SK-N-SH (cell line): ENCODE measurements at regions of chr5 and their contacts with region 1.

Region 1: GRCh38 chr5:142548739-142549275 is 137.1 kb downstream of the FGF1 start:
- DNase-seq: peak; percentile 87
- H3K4me3 ChIP-seq: peak overlapping the region in 1 of 2 experiments; percentile 34; a peak in 1 of 4 replicates
- H3K27ac ChIP-seq: peak overlapping the region; percentile 59 to 60; a peak in 3 of 4 replicates
- H3K4me1 ChIP-seq: peaks cover 21 to 37% of the 10 kb centered on the region in 2 experiments
- H3K27me3 ChIP-seq: no peaks in the 10 kb centered on the region
- CTCF ChIP-seq: peak; percentile 98
- EP300 ChIP-seq: no peak
- RAD21 ChIP-seq: peak; percentile 95

Region 2: DNA sequence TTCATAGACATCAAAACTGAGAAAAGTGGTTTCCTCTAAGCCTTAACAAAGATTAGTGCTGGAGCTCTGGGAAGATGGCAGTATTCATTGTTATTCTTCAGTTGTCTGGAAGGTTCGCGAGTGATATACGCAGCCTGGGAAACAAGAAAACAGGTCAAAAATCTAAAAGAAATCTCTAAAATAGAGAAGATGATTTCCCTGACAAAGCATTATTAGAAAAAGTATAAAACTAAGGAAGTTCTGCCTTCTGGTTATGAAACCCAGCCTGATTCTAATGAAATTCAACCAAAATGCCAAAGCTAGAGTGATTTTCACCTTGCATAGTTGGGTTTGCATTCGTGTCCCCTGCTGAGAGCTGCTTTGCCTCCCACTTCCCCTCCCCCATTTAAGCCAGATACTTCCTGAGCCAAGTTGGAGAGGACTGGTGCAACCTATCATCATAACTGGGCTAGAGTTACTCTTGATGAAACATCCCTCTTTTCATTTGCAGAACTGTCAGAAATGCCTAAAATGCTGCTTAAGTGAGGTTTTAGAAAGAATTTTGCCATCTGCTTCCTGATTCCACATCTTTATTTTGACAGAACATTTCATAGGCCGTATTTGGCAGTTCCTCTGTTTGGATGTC is 391.9 kb before region 1 on chr5:
- CTCF ChIA-PET with region 1: interaction called, 91 read pairs
- POLR2A ChIA-PET with region 1: interaction called, 5 read pairs
- DNase-seq: no peak
- H3K4me3 ChIP-seq: no peak overlapping the region
- H3K27ac ChIP-seq: peak overlapping the region in 1 of 2 experiments; percentile 65; a peak in 2 of 4 replicates
- H3K4me1 ChIP-seq: peaks cover 5 to 11% of the 10 kb centered on the region in 2 experiments; a peak in 3 of 4 replicates
- H3K27me3 ChIP-seq: no peaks in the 10 kb centered on the region
- CTCF ChIP-seq: no peak
- EP300 ChIP-seq: no peak
- RAD21 ChIP-seq: no peak

Region 3: GRCh38 chr5:142186857-142187594 is 361.8 kb before region 1 on chr5:
- CTCF ChIA-PET with region 1: interaction called, 34 read pairs
- POLR2A ChIA-PET with region 1: no interaction called
- DNase-seq: peak; percentile 67
- H3K4me3 ChIP-seq: no peak overlapping the region
- H3K27ac ChIP-seq: peak overlapping the region in 1 of 2 experiments; percentile 98; a peak in 2 of 4 replicates
- H3K4me1 ChIP-seq: peaks cover 0 to 49% of the 10 kb centered on the region in 2 experiments; a peak in 2 of 4 replicates
- H3K27me3 ChIP-seq: no peaks in the 10 kb centered on the region
- CTCF ChIP-seq: no peak
- EP300 ChIP-seq: peak in 1 of 2 experiments; percentile 12; a peak in 2 of 4 replicates
- RAD21 ChIP-seq: no peak

Region 4: DNA sequence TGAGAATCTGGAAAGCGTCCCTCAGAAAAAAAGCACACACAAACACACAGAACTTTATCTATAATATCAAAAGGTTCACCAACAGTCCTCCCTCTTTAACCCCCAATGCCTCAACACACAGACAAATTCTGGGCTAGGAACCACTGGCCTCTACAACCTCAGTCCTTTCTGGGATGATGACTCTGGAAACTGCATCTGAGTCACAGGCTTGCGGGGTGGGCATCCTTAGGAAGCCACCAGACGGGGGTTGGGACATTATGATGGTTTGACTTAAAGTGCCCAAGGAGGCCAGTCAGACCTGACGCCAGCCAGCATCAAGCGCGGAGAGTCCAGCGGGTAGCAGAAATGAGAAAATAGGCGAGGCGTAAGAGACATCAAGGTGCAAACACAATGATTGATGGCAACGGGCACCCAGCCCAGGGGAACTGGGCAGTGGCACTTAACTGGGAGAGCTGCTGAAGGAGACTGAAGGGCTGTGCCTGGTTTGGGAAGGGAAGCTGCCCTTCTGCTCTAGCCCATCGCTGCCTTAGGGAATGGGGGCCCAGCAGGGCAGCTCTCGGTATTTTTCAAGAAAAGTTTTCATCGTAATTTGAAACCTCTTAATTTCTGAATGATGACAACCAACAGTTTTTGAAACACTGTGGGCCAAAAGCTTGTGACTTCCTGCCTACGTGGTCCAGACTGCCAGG is 244.7 kb before region 1 on chr5:
- CTCF ChIA-PET with region 1: interaction called, 12 read pairs
- POLR2A ChIA-PET with region 1: no interaction called
- DNase-seq: no peak
- H3K4me3 ChIP-seq: no peak overlapping the region
- H3K27ac ChIP-seq: peak overlapping the region in 1 of 2 experiments; percentile 44; a peak in 3 of 4 replicates
- H3K4me1 ChIP-seq: peaks cover 15 to 30% of the 10 kb centered on the region in 2 experiments; a peak in 3 of 4 replicates
- H3K27me3 ChIP-seq: no peaks in the 10 kb centered on the region
- CTCF ChIP-seq: no peak
- EP300 ChIP-seq: no peak
- RAD21 ChIP-seq: no peak

Region 5: DNA sequence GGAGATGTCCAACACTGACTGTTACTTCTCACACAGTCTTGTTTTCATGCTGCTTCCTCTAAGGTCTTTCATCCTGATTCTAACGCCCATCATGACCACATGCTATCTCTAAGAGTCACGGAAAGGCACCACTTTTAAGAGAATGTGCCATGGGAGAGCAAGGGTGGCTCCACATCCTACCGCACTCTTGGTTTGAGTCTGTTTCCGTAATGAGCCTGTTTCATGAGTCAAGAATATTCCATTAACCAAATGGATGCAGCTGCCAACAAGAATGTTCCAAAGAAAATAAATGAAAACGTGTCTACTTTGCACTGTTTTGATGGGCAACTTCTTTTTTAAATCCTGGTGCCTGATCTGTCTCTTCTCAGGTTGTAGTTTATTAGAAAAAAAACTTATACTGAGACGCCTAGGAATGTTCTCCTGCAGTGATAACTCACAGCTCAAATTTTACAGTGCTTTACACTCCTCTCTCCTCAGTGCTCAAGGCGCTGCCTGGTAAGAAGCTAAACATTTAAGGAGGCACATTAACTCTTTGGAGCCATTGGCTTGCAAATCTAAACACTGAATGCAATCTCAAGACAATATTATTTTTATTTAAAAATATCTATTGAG is 12.8 kb after region 1 on chr5:
- CTCF ChIA-PET with region 1: interaction called, 23 read pairs
- POLR2A ChIA-PET with region 1: no interaction called
- DNase-seq: no peak
- H3K4me3 ChIP-seq: no peak overlapping the region
- H3K27ac ChIP-seq: peak overlapping the region in 1 of 2 experiments; percentile 5; a peak in 1 of 4 replicates
- H3K4me1 ChIP-seq: no peaks in the 10 kb centered on the region
- H3K27me3 ChIP-seq: no peaks in the 10 kb centered on the region
- CTCF ChIP-seq: no peak
- EP300 ChIP-seq: no peak
- RAD21 ChIP-seq: no peak

Region 6: DNA sequence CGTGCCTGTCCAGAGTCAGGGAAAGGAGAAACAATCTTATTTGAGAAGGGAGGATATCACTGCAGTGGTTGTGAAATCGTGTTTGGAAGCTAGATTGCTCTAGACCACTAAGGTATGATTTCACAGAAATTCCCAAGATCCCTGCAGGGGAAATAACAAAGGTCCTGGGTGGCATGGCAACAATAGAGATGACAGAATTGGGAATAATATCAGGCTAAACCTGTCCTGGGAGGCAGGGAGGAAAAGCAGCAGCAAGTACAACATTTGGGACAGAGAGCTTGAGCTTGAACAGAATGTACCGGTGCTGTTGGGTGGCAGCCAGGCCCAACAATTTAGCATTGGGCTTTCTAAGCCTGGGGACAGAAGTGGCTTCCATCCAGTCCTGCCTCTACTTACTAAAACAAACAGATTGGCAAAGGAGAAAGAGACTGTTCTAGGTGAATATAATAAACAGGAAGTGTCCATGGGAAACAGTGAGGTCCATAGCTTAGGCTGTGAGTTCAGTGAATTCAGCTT is 204.4 kb after region 1 on chr5:
- CTCF ChIA-PET with region 1: no interaction called
- POLR2A ChIA-PET with region 1: no interaction called
- DNase-seq: no peak
- H3K4me3 ChIP-seq: no peak overlapping the region
- H3K27ac ChIP-seq: no peak overlapping the region
- H3K4me1 ChIP-seq: peaks cover 10 to 18% of the 10 kb centered on the region in 2 experiments; a peak in 3 of 4 replicates
- H3K27me3 ChIP-seq: no peaks in the 10 kb centered on the region
- CTCF ChIP-seq: no peak
- EP300 ChIP-seq: no peak
- RAD21 ChIP-seq: no peak